ENCODE measurements at regions of chr6 and their contacts with region 1.

Region 1: GRCh38 chr6:57177545-57178265 is 5.6 kb downstream of the BAG2 start:
- DNase-seq: no peak
- H3K4me3 ChIP-seq: no peak overlapping the region
- H3K27me3 ChIP-seq: no peaks in the 10 kb centered on the region
- CTCF ChIP-seq: no peak

Region 2: GRCh38 chr6:56961157-56961556 is 216.5 kb before region 1 on chr6:
- CTCF ChIA-PET with region 1: no interaction called
- POLR2A ChIA-PET with region 1: no interaction called
- DNase-seq: no peak
- H3K4me3 ChIP-seq: no peak overlapping the region
- H3K27me3 ChIP-seq: no peaks in the 10 kb centered on the region
- CTCF ChIP-seq: no peak

Region 3: DNA sequence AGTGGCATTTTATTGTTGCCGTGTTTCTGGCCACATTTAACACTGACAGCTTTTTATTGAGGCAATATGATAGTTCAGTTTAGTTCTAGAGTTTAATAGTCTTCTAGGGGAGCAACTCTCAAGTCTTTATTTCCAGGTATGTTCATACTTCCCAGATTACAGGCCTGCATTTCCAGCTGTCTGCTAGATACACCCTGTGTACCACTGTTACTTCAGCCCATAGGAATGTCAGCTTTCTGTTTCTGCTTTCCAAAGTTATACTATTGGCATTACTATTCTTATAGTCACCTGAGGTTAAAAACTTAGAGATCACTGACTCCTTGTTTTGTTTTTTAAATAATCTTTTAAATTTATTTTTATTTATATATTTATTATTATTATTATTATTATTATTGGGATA is 80.1 kb before region 1 on chr6:
- CTCF ChIA-PET with region 1: no interaction called
- POLR2A ChIA-PET with region 1: no interaction called
- DNase-seq: no peak
- H3K4me3 ChIP-seq: no peak overlapping the region
- H3K27me3 ChIP-seq: no peaks in the 10 kb centered on the region
- CTCF ChIP-seq: no peak

Region 4: DNA sequence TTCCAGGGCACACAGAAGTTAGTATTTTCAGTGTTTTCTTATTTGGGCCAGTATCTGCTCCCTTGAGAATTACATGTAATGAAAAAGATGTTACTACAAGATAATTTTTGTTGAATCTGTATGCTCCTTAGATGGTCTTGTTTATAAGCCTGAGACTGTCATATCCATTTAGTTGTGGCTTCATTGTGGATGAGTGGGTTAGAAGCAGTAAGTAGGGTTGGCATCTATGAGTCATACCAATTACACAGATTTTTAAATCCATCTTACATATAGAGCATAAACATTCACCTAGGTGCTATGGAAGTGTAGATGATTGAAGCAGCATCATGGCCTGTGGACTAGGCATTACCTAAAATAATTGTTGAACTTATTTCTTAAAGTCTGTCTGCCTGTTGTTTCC is 19.0 kb before region 1 on chr6:
- CTCF ChIA-PET with region 1: no interaction called
- POLR2A ChIA-PET with region 1: no interaction called
- DNase-seq: no peak
- H3K4me3 ChIP-seq: no peak overlapping the region
- H3K27me3 ChIP-seq: no peaks in the 10 kb centered on the region
- CTCF ChIP-seq: no peak

Region 5: DNA sequence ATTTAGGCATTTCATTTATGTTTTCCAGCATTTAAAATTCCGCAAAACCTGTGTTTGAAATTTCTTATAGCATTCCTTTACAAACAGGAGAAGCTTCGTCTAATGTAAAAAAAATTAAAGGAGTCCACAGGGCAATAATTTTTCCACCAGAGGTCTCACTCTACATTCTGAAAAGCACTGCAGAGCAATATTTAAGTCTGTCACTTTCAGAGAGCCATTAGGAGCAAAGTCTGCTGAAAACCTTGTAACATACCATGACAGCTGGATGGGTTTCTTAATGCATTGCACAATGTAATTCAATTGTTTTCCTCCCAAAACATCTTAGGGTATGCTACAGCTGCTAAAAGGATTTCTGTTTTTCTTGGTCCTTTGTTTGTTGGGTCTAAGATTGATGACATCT is 12.4 kb after region 1 on chr6:
- CTCF ChIA-PET with region 1: interaction called, 13 read pairs
- POLR2A ChIA-PET with region 1: no interaction called
- DNase-seq: no peak
- H3K4me3 ChIP-seq: no peak overlapping the region
- H3K27me3 ChIP-seq: no peaks in the 10 kb centered on the region
- CTCF ChIP-seq: peak; percentile 54; the same call in 1 of the 2 replicates